CD4-positive, alpha-beta memory T cell (primary cell): ENCODE measurements at regions of chr2 and their contacts with region 1.

Region 1: DNA sequence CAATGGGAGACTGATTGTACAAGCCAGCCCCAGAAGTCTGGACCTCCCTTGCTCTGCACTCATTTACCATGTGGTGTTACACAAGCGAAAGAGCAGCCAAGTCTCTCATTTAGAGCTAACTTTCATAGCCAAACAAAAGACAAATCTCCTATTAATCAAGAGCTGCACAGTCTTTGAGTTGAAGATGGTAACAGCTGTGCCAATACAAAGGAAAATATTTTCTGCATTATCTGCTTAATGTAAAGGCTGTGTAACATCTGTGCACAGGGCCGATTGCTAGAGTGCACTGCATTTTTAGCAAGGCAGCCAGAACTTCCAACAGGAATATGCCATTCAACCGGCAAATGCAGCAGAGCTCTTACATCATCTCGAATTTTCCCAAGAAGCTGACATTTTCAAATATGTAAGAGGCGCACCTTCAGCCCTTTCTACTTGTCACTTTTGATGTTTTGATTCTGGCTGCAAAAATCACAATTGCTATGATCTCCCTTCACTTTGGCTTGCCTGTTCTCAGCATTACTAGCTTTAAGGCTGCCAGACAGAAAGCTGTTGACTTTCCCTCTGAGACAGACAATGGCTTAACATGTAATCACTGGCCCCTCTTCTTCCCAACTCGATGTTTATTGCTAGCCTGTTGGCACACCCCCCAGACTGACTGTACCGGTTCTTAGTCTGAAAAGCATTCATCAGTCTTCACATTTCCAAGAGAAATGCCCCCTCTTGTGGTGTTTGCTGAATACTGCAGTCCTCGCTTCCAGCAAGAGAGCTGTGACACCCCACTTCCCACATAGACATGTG is 96.9 kb upstream of the TANK start:
- DNase-seq: peak; percentile 56 to 64 (median 61)
- H3K4me3 ChIP-seq: no peak overlapping the region
- H3K4me3 Mint-ChIP-seq: no peak overlapping the region
- H3K27ac ChIP-seq: no peak overlapping the region
- H3K27ac Mint-ChIP-seq: peak overlapping the region in 1 of 7 donors; percentile 48
- H3K4me1 ChIP-seq: no peaks in the 10 kb centered on the region
- H3K4me1 Mint-ChIP-seq: peaks cover 3 to 6% (median 4%) of the 10 kb centered on the region in 4 donors
- H3K27me3 ChIP-seq: no peaks in the 10 kb centered on the region
- H3K27me3 Mint-ChIP-seq: peaks cover 0 to 2% of the 10 kb centered on the region in 2 donors

Region 2: GRCh38 chr2:160252278-160252887 is 811.0 kb before region 1 on chr2:
- CTCF ChIA-PET with region 1: interaction called, 21 read pairs
- POLR2A ChIA-PET with region 1: no interaction called
- intact Hi-C with region 1: loop called (anchors 1 kb)
- DNase-seq: peak in 1 of 5 donors; percentile 17
- H3K4me3 ChIP-seq: no peak overlapping the region
- H3K4me3 Mint-ChIP-seq: no peak overlapping the region
- H3K27ac ChIP-seq: no peak overlapping the region
- H3K27ac Mint-ChIP-seq: no peak overlapping the region
- H3K4me1 ChIP-seq: no peaks in the 10 kb centered on the region
- H3K4me1 Mint-ChIP-seq: peaks cover 0 to 5% (median 0%) of the 10 kb centered on the region in 4 donors
- H3K27me3 ChIP-seq: no peaks in the 10 kb centered on the region
- H3K27me3 Mint-ChIP-seq: no peaks in the 10 kb centered on the region

Region 3: DNA sequence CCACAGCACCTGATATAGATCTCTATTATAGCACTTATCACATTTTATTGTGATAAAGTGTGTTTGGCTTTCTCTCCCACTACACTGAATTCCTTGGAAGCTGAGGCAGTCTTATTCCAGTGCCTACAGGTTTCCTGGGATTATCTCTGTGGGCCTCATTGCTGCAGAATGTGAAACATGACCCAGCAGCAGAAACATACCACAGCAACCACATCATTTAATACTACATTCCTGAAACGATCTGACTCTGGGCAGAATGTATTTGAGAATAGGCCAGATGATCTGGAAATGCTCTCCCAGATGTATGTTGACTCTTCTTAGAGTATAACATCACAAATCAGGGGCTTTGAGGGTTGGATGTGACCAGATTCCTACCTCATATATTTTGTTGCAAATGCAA is 226.6 kb before region 1 on chr2:
- CTCF ChIA-PET with region 1: no interaction called
- POLR2A ChIA-PET with region 1: no interaction called
- intact Hi-C with region 1: no loop called
- DNase-seq: no peak
- H3K4me3 ChIP-seq: no peak overlapping the region
- H3K4me3 Mint-ChIP-seq: no peak overlapping the region
- H3K27ac ChIP-seq: no peak overlapping the region
- H3K27ac Mint-ChIP-seq: no peak overlapping the region
- H3K4me1 ChIP-seq: no peaks in the 10 kb centered on the region
- H3K4me1 Mint-ChIP-seq: no peaks in the 10 kb centered on the region
- H3K27me3 ChIP-seq: no peaks in the 10 kb centered on the region
- H3K27me3 Mint-ChIP-seq: peaks cover 5 to 9% of the 10 kb centered on the region in 2 donors

Region 4: GRCh38 chr2:161004379-161004778 is 59.0 kb before region 1 on chr2:
- CTCF ChIA-PET with region 1: interaction called, 10 read pairs
- POLR2A ChIA-PET with region 1: no interaction called
- intact Hi-C with region 1: no loop called
- DNase-seq: no peak
- H3K4me3 ChIP-seq: no peak overlapping the region
- H3K4me3 Mint-ChIP-seq: no peak overlapping the region
- H3K27ac ChIP-seq: no peak overlapping the region
- H3K27ac Mint-ChIP-seq: no peak overlapping the region
- H3K4me1 ChIP-seq: no peaks in the 10 kb centered on the region
- H3K4me1 Mint-ChIP-seq: no peaks in the 10 kb centered on the region
- H3K27me3 ChIP-seq: no peaks in the 10 kb centered on the region
- H3K27me3 Mint-ChIP-seq: peaks cover 6 to 19% of the 10 kb centered on the region in 2 donors

Region 5: GRCh38 chr2:161090411-161090810 is 27.1 kb after region 1 on chr2:
- CTCF ChIA-PET with region 1: interaction called, 41 read pairs
- POLR2A ChIA-PET with region 1: no interaction called
- intact Hi-C with region 1: no loop called
- DNase-seq: peak in 4 of 5 donors; percentile 21 to 44 (median 34)
- H3K4me3 ChIP-seq: peak overlapping the region in 1 of 2 donors; percentile 14
- H3K4me3 Mint-ChIP-seq: peak overlapping the region; percentile 58 to 85 (median 78)
- H3K27ac ChIP-seq: no peak overlapping the region
- H3K27ac Mint-ChIP-seq: peak overlapping the region in 6 of 7 donors; percentile 27 to 89 (median 68)
- H3K4me1 ChIP-seq: peaks cover 11% of the 10 kb centered on the region
- H3K4me1 Mint-ChIP-seq: peaks cover 12 to 26% (median 20%) of the 10 kb centered on the region in 4 donors
- H3K27me3 ChIP-seq: no peaks in the 10 kb centered on the region
- H3K27me3 Mint-ChIP-seq: no peaks in the 10 kb centered on the region

Region 6: GRCh38 chr2:161160226-161161069 is 97.1 kb after region 1 on chr2 and contains the start of gene TANK:
- CTCF ChIA-PET with region 1: interaction called, 7 read pairs
- POLR2A ChIA-PET with region 1: interaction called, 3 read pairs
- intact Hi-C with region 1: loop called (anchors 1 kb)
- DNase-seq: peak; percentile 89 to 94 (median 91)
- H3K4me3 ChIP-seq: peak within 1 kb of the TSS; percentile 86 to 90
- H3K4me3 Mint-ChIP-seq: peak within 1 kb of the TSS; percentile 96 to 100 (median 98)
- H3K27ac ChIP-seq: peak within 1 kb of the TSS; percentile 95
- H3K27ac Mint-ChIP-seq: peak within 1 kb of the TSS; percentile 94 to 99 (median 98)
- H3K4me1 ChIP-seq: peaks cover 54% of the 10 kb centered on the region
- H3K4me1 Mint-ChIP-seq: peaks cover 37 to 84% (median 61%) of the 10 kb centered on the region in 4 donors
- H3K27me3 ChIP-seq: no peaks in the 10 kb centered on the region
- H3K27me3 Mint-ChIP-seq: no peaks in the 10 kb centered on the region
- total RNA-seq, gene TANK: 90.2 to 91.2 TPM